ENCODE measurements at regions of chr11 and their contacts with region 1.

Region 1: DNA sequence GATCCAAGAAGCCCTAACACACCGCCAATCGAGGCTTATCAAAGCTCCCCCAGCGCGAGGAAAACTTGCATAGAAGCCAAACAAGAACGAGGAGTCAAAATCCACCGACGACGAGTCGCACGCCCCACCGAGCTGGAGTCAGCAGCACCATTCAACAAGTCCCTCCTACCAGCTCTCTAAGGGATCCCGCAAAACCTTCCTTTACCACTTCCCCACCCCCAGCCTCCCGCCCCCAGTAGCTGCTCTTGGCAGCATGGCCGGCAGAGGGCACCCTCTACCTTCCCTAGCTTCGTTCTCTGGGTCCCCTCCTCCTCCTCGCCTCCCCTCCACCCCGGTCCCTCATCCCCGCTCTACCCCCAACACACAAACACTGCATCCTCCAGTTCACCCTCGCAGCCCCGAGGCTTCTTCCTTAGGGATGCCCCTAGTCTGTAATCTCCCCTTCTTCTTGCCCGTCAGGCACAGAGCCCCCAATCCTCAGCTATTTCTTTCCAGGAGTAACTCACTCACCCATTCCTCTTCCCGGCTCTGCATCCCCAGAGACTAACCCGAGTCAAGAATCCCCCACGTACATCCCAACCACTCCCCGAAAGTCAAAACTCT is 1.3 kb downstream of the BDNF start:
- ATAC-seq: peak; percentile 55 to 83 (median 76)
- H3K4me3 ChIP-seq: peak overlapping the region; percentile 70 to 99 (median 85)
- H3K27ac ChIP-seq: no peak overlapping the region
- H3K4me1 ChIP-seq: no peaks in the 10 kb centered on the region

Region 2: GRCh38 chr11:27124514-27125264 is 574.3 kb before region 1 on chr11:
- in situ Hi-C with region 1: no loop called
- ATAC-seq: peak in 3 of 8 experiments; percentile 36 to 64 (median 53)
- H3K4me3 ChIP-seq: no peak overlapping the region
- H3K27ac ChIP-seq: no peak overlapping the region
- H3K4me1 ChIP-seq: peaks cover 0 to 6% of the 10 kb centered on the region in 2 donors

Region 3: DNA sequence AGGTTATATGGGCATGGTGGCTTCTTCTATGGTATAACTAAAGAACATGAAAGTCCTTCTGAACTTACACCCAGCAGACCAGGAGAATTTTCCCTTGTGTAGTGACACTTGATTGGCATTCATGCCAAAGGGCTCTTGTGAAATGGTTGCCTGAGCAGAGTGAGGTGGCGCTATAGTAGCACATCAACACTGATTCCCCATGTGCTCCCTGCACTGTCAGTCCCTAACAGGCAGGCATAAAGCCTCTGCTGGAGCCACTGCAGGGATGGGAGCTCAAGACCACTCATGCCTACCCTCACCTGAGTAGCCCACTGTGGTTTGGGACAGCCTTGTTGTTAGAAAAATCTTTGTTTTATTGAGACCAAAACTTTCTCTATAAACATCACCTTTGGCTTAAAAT is 99.8 kb before region 1 on chr11:
- in situ Hi-C with region 1: no loop called
- ATAC-seq: no peak
- H3K4me3 ChIP-seq: no peak overlapping the region
- H3K27ac ChIP-seq: no peak overlapping the region
- H3K4me1 ChIP-seq: peaks cover 0 to 6% of the 10 kb centered on the region in 2 donors

Region 4: DNA sequence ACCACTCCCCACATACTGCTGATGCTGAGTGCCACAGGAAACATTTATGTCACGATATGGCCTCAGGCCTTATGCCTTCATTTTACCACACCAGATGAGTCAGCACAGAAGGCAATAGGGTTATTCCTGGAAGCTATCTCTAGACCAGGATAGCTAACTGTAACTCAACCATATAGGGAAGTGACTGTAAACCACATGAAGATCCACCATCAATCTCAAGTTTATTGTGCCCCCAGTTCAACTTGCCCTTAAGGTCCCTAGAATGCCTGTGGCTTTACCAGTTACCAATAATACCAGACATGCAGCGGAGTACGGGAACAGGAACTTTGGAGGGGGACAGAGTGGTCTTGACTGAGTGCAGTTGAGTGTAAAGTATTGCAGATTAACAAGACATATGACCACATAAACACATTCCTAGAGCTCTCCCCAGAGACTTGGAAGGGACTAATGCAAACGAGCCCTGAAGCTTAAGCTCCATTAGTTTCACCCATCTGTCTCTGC is 228.1 kb after region 1 on chr11:
- in situ Hi-C with region 1: no loop called
- ATAC-seq: peak in 6 of 8 experiments; percentile 30 to 97 (median 48)
- H3K4me3 ChIP-seq: no peak overlapping the region
- H3K27ac ChIP-seq: no peak overlapping the region
- H3K4me1 ChIP-seq: no peaks in the 10 kb centered on the region

Region 5: DNA sequence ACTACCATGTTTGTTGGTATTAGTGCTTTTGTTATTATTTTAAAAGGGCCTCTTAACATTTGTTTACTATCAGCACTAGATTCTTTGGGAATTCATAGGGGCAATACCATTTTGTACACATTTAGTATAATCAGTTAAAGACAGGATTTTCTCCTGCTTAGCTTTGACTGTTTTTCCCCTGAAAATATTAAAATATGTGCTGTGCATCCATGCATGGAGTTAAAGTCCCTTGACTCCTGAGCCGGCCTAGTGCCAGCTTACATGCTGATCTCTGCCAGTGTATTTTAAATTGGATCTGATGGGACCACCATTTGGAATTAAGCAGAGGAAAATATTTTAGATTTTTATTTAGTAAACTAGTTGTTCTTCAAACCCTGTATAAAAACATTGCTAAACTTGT is 570.6 kb after region 1 on chr11:
- in situ Hi-C with region 1: no loop called
- ATAC-seq: no peak
- H3K4me3 ChIP-seq: no peak overlapping the region
- H3K27ac ChIP-seq: no peak overlapping the region
- H3K4me1 ChIP-seq: no peaks in the 10 kb centered on the region

Region 6: GRCh38 chr11:29333993-29334775 is 1635.2 kb after region 1 on chr11:
- in situ Hi-C with region 1: loop called (anchors 10 to 25 kb)
- ATAC-seq: peak; percentile 66 to 84 (median 76)
- H3K4me3 ChIP-seq: no peak overlapping the region
- H3K27ac ChIP-seq: no peak overlapping the region
- H3K4me1 ChIP-seq: peaks cover 2 to 5% of the 10 kb centered on the region in 2 donors

Region 7: GRCh38 chr11:29343465-29344333 is 1644.7 kb after region 1 on chr11:
- in situ Hi-C with region 1: loop called (anchors 10 to 25 kb)
- ATAC-seq: peak; percentile 70 to 99 (median 84)
- H3K4me3 ChIP-seq: no peak overlapping the region
- H3K27ac ChIP-seq: no peak overlapping the region
- H3K4me1 ChIP-seq: no peaks in the 10 kb centered on the region